CD4-positive, alpha-beta memory T cell (primary cell): ENCODE measurements at regions of chr10 and their contacts with region 1.

Region 1: GRCh38 chr10:60728056-60728455 is 50.2 kb upstream of the CDK1 start:
- DNase-seq: peak; percentile 56 to 84 (median 75)
- H3K4me3 ChIP-seq: peak overlapping the region in 1 of 2 donors; percentile 42
- H3K4me3 Mint-ChIP-seq: peak overlapping the region; percentile 68 to 86 (median 84)
- H3K27ac ChIP-seq: peak overlapping the region; percentile 72
- H3K27ac Mint-ChIP-seq: peak overlapping the region; percentile 89 to 96 (median 91)
- H3K4me1 ChIP-seq: peaks cover 72% of the 10 kb centered on the region
- H3K4me1 Mint-ChIP-seq: peaks cover 61 to 83% (median 75%) of the 10 kb centered on the region in 4 donors
- H3K27me3 ChIP-seq: no peaks in the 10 kb centered on the region
- H3K27me3 Mint-ChIP-seq: no peaks in the 10 kb centered on the region

Region 2: DNA sequence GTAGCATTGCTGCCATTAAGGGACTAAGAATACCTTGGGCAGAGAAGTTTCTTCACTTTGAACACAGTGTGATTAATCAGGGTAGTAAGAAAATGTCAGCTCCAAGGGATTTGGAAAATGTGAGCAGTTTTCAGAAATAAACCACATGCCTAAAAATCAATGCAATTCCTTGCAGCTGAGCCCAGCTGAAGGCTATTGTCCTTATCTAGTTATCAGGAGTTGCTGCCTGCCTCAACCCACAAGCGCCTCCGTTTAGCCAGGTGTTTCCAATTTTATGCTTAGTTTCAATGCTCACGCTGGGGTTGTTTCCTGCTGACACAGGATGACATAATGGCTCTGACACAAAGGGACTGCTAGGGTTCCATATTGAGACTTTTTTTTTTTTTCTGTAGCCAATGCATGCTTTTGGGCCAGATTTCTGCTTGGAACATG is 206.1 kb before region 1 on chr10:
- CTCF ChIA-PET with region 1: no interaction called
- POLR2A ChIA-PET with region 1: no interaction called
- intact Hi-C with region 1: no loop called
- DNase-seq: no peak
- H3K4me3 ChIP-seq: no peak overlapping the region
- H3K4me3 Mint-ChIP-seq: no peak overlapping the region
- H3K27ac ChIP-seq: no peak overlapping the region
- H3K27ac Mint-ChIP-seq: no peak overlapping the region
- H3K4me1 ChIP-seq: no peaks in the 10 kb centered on the region
- H3K4me1 Mint-ChIP-seq: peaks cover 0 to 23% (median 10%) of the 10 kb centered on the region in 4 donors
- H3K27me3 ChIP-seq: no peaks in the 10 kb centered on the region
- H3K27me3 Mint-ChIP-seq: no peaks in the 10 kb centered on the region

Region 3: GRCh38 chr10:60704480-60704879 is 23.6 kb before region 1 on chr10:
- CTCF ChIA-PET with region 1: interaction called, 7 read pairs
- POLR2A ChIA-PET with region 1: interaction called, 21 read pairs
- intact Hi-C with region 1: loop called (anchors 1 kb)
- DNase-seq: no peak
- H3K4me3 ChIP-seq: no peak overlapping the region
- H3K4me3 Mint-ChIP-seq: peak overlapping the region in 2 of 8 donors; percentile 3 to 49
- H3K27ac ChIP-seq: no peak overlapping the region
- H3K27ac Mint-ChIP-seq: peak overlapping the region in 4 of 7 donors; percentile 9 to 89 (median 51)
- H3K4me1 ChIP-seq: peaks cover 44% of the 10 kb centered on the region
- H3K4me1 Mint-ChIP-seq: peaks cover 46 to 65% (median 50%) of the 10 kb centered on the region in 4 donors
- H3K27me3 ChIP-seq: no peaks in the 10 kb centered on the region
- H3K27me3 Mint-ChIP-seq: no peaks in the 10 kb centered on the region

Region 4: DNA sequence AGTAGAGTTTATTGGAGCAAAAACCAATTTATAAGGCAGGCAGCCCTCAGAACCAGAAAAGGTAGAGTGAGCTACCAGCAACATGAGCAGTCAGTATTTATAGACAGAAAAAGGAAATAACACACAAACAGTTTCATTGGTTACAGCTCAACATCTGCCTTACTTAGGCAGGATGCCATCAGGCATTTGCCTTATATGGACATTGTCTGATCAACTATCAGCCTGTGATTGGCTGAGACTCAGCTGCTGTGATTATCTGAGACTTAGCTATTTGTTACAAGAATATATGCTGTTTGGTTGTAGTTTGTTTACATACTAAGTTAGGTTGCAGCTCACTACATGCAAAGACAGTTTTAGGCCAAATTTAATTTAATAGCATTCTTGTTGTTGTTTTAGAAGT is 10.2 kb before region 1 on chr10:
- CTCF ChIA-PET with region 1: interaction called, 11 read pairs
- POLR2A ChIA-PET with region 1: interaction called, 29 read pairs
- intact Hi-C with region 1: loop called (anchors 2 kb)
- DNase-seq: no peak
- H3K4me3 ChIP-seq: no peak overlapping the region
- H3K4me3 Mint-ChIP-seq: peak overlapping the region in 1 of 8 donors; percentile 40
- H3K27ac ChIP-seq: no peak overlapping the region
- H3K27ac Mint-ChIP-seq: no peak overlapping the region
- H3K4me1 ChIP-seq: peaks cover 63% of the 10 kb centered on the region
- H3K4me1 Mint-ChIP-seq: peaks cover 48 to 70% (median 53%) of the 10 kb centered on the region in 4 donors
- H3K27me3 ChIP-seq: no peaks in the 10 kb centered on the region
- H3K27me3 Mint-ChIP-seq: no peaks in the 10 kb centered on the region